BJ (cell line): ENCODE measurements at regions of chr6 and their contacts with region 1.

Region 1: GRCh38 chr6:132530293-132530974 is 7.6 kb upstream of the TAAR9 start:
- DNase-seq: no peak
- H3K4me3 ChIP-seq: no peak overlapping the region
- H3K27me3 ChIP-seq: no peaks in the 10 kb centered on the region
- CTCF ChIP-seq: peak; percentile 81

Region 2: DNA sequence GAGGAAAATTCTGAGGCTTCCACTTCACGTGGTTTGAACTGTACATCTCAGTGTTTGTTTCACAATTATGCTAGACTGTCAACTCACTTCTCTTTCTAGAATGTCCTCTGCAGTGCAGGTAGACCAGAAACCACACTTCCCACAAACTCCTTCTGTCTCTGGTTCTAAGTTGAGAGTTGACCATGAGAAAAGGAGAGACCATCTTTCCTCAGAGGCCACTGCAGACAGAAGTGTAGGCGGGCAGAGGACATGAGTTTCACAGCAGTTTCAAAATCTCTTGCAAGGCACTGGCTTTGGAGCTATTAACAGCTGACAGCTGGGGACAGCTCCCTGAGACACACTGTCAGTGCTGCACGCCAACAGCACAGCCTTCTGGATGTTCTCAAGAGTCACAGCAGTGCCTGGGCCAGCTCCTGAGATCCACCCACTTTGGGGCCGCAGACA is 73.7 kb before region 1 on chr6:
- CTCF ChIA-PET with region 1: no interaction called
- POLR2A ChIA-PET with region 1: no interaction called
- DNase-seq: no peak
- H3K4me3 ChIP-seq: no peak overlapping the region
- H3K27me3 ChIP-seq: no peaks in the 10 kb centered on the region
- CTCF ChIP-seq: 0 out of 2 replicates have a peak, but pooled peaks have one; percentile 19

Region 3: GRCh38 chr6:132512638-132513632 is 17.5 kb before region 1 on chr6 and contains the start of gene STX7:
- CTCF ChIA-PET with region 1: interaction called, 12 read pairs
- POLR2A ChIA-PET with region 1: interaction called, 3 read pairs
- DNase-seq: peak; percentile 55
- H3K4me3 ChIP-seq: peak within 1 kb of the TSS; percentile 83
- H3K27me3 ChIP-seq: peaks cover 6% of the 10 kb centered on the region
- CTCF ChIP-seq: no peak
- polyA plus RNA-seq, gene STX7: 31.0 and 51.2 TPM in 2 replicates